Posterior vena cava (tissue), 2 donors: ENCODE measurements at regions of chr15 and their contacts with region 1.

Region 1: GRCh38 chr15:60964527-60964926 is 264.6 kb downstream of the RORA start:
- DNase-seq: no peak

Region 2: GRCh38 chr15:60620708-60621107 is 343.8 kb before region 1 on chr15:
- intact Hi-C with region 1: no loop called
- DNase-seq: peak; percentile 85

Region 3: DNA sequence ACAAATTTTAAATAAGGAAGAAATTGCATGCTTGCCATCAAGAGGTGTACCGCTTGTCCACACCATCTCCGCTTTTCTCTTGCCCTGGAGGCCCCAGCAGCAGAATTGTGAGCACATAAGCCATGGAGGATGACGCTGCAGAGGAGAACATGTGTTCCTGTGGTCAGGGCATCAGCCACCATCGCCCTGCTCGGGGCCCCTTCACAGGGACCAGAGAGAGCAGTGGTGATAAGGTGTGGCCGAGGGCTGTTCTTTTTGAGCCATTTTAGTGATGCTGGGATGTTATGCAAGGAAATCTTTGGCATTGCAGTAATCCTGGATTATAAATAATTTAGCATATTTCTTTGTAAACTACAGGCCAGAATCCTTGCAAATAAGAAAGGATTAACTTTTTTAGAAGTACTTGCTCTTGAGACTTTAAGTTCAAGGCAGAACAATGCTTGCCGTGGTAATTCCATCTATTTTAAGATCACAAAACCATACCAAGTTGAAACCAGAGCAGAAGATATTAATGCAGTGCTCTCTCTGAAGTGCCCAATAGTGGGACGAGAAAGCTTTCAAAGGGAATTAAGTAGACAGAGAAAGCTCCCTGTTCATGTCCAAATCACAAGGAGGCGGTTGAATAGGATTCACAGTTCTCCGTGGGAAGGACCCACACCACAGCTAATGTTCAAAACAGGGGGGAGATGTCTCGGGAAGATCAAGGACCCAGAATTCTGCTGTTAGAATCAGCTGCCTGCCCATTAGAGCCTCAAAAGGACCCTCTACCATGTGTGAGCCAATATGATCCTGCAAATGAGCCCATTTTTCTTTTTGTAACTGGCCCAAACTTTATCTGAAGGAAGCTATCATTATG is 73.9 kb before region 1 on chr15:
- intact Hi-C with region 1: loop called in 1 of 2 experiments (anchors 2 kb)
- DNase-seq: no peak

Region 4: GRCh38 chr15:60901647-60902046 is 62.9 kb before region 1 on chr15:
- intact Hi-C with region 1: no loop called
- DNase-seq: no peak